ENCODE measurements at regions of chr7 and their contacts with region 1.

Region 1: DNA sequence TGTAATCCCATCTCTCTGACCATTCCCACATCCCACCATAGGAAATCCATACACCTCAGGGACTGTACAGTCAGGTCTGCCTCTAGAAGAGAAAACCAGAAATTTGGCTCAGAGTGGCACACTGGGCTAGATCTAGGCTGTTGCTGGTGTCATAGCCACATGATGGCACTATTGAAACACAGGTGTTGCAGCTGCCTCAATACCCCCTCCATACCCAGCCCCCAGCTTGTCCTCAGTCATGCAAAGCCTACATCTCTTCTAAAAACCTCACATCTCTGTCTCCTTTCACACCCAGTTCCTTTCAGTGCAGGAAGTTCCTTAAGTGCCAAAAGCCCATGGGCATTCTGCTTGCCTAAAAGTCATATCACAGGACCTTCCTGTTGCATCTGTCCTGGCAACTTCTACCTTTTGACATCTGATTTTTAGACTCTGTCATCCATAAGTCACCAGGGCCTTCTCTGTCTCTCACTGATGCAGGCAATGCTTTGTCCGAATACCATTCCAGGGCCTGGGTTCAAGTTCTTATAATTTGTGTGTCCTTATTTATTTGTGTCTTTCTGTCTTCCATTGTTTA is 27.0 kb upstream of the HIBADH start:
- DNase-seq: peak; percentile 50
- ATAC-seq: peak; percentile 87
- H3K4me3 Mint-ChIP-seq: no peak overlapping the region
- H3K27ac Mint-ChIP-seq: no peak overlapping the region
- H3K4me1 Mint-ChIP-seq: no peaks in the 10 kb centered on the region
- H3K27me3 Mint-ChIP-seq: peaks cover 9% of the 10 kb centered on the region

Region 2: GRCh38 chr7:27515933-27516332 is 173.7 kb before region 1 on chr7:
- CTCF ChIA-PET with region 1: no interaction called
- POLR2A ChIA-PET with region 1: no interaction called
- intact Hi-C with region 1: no loop called
- DNase-seq: no peak
- ATAC-seq: no peak
- H3K4me3 Mint-ChIP-seq: no peak overlapping the region
- H3K27ac Mint-ChIP-seq: no peak overlapping the region
- H3K4me1 Mint-ChIP-seq: no peaks in the 10 kb centered on the region
- H3K27me3 Mint-ChIP-seq: no peaks in the 10 kb centered on the region

Region 3: DNA sequence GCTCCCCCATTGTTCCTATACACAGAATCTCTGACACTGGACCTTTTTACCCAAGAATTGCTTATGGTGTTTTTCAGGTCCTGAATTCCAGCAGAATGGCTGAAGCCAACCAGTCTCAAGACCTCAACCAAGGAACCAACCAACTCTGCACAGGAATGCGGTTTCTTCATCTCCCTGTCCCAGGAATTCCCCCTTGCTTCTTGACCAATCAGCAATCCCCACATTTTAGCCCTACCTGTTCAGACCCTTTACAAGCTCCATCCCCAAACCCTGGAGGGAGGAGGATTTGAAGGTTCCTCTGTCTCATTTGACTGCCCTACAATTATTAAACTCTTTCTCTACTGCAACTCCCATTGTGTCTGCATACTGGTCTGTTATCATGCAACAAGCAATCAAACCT is 62.5 kb before region 1 on chr7:
- CTCF ChIA-PET with region 1: no interaction called
- POLR2A ChIA-PET with region 1: no interaction called
- intact Hi-C with region 1: no loop called
- DNase-seq: no peak
- ATAC-seq: no peak
- H3K4me3 Mint-ChIP-seq: no peak overlapping the region
- H3K27ac Mint-ChIP-seq: no peak overlapping the region
- H3K4me1 Mint-ChIP-seq: no peaks in the 10 kb centered on the region
- H3K27me3 Mint-ChIP-seq: no peaks in the 10 kb centered on the region

Region 4: DNA sequence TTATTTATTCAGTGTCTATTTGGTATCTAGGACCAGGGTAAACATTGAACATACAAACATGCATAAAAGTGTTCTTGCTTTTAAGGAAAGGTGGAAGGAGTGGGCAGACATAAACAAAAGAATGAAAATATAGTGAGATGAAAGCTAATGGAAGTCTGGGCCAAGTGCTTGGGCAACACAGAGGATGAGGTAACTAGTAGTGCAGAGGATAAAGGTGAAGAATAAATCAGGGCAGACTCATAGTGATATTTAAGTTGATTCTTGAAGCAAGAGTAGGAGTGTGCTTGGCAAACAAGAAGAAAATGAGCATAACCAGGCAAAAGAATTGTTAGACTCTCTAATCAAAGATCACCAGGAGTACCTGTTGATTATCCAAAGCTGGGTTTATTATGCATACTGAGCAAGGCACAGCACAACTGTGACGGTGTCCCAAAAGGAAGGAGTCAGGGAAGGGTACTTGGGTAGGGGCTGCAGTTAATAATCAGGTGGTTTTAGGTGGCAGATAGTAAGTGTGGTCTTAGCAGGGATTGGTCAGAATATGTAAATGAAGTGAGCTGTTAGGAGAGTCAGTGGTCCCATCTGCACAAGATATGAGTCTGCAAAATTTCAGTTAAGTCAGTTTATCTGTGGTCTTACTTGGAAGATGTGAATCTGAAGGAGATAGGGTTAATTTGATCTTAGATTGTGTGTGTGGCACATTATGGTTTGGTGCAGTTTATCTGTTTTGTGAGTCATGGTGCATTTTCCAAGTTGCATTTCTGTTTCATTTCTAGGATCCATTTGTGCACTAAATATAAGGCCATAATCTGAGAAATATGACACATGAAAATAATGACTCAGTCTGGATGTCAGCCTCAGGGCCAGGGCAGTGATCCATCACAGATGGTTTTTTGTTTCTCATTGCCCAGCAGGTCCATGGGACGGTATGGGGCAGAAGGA is 19.7 kb after region 1 on chr7:
- CTCF ChIA-PET with region 1: no interaction called
- POLR2A ChIA-PET with region 1: no interaction called
- intact Hi-C with region 1: loop called in 1 of 2 experiments (anchors 1 kb)
- DNase-seq: no peak
- ATAC-seq: peak; percentile 55
- H3K4me3 Mint-ChIP-seq: no peak overlapping the region
- H3K27ac Mint-ChIP-seq: no peak overlapping the region
- H3K4me1 Mint-ChIP-seq: peaks cover 2% of the 10 kb centered on the region
- H3K27me3 Mint-ChIP-seq: peaks cover 4% of the 10 kb centered on the region

Region 5: GRCh38 chr7:27921081-27921836 is 231.6 kb after region 1 on chr7:
- CTCF ChIA-PET with region 1: interaction called, 3 read pairs
- POLR2A ChIA-PET with region 1: no interaction called
- intact Hi-C with region 1: loop called in 1 of 2 experiments (anchors 2 kb)
- DNase-seq: peak; percentile 32
- ATAC-seq: peak; percentile 44
- H3K4me3 Mint-ChIP-seq: no peak overlapping the region
- H3K27ac Mint-ChIP-seq: no peak overlapping the region
- H3K4me1 Mint-ChIP-seq: no peaks in the 10 kb centered on the region
- H3K27me3 Mint-ChIP-seq: no peaks in the 10 kb centered on the region

Region 6: DNA sequence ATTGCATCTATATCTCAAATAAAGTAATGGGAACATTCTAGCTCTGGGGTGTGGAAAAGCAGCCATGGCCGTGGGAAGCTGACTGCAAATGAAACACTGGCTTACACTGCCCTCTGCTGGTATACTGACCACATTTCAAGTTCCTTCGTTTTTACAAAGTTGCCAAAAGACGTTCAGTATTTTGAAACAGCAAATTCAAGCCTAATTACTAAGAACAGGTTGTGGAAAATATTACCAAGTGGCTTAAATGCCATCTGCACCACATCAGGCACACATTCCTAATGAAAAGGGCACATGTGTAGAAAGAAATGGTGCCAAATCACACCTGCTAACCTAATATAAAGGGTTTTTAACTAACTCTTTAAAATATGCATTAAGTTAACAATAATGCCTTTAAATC is 407.0 kb after region 1 on chr7:
- CTCF ChIA-PET with region 1: no interaction called
- POLR2A ChIA-PET with region 1: no interaction called
- intact Hi-C with region 1: loop called in 1 of 2 experiments (anchors 10 kb)
- DNase-seq: peak; percentile 60
- ATAC-seq: peak; percentile 63
- H3K4me3 Mint-ChIP-seq: no peak overlapping the region
- H3K27ac Mint-ChIP-seq: no peak overlapping the region
- H3K4me1 Mint-ChIP-seq: peaks cover 10% of the 10 kb centered on the region
- H3K27me3 Mint-ChIP-seq: no peaks in the 10 kb centered on the region